Psoas muscle (tissue), 8 donors: ENCODE measurements at regions of chr2 and their contacts with region 1.

Region 1: GRCh38 chr2:86079981-86080911 is 25.4 kb downstream of the POLR1A start:
- DNase-seq: peak; percentile 81 to 91
- ATAC-seq: peak; percentile 82 to 91 (median 87)
- H3K4me3 ChIP-seq: no peak overlapping the region
- H3K27ac ChIP-seq: peak overlapping the region; percentile 58
- H3K4me1 ChIP-seq: peaks cover 16% of the 10 kb centered on the region
- H3K27me3 ChIP-seq: no peaks in the 10 kb centered on the region
- CTCF ChIP-seq: peak; percentile 76

Region 2: DNA sequence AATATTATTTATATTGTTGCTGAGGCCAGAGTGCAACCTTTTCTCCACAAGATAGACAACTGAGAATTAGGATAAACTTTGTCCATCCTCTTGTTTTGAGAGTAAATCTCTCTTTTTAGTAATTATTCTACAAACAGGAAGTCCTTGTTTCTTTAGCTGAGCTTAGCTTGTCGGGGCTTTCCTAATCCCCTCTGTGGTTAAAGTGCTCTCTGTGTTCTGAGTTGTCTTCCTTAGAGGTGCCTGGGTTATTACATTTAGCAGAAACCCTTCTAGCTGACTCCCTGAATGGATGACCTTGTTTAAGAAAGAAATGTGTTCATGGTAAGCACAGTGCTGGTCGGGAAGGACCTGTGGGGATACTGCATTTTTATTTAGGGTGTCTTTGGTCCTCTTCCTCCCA is 451.6 kb before region 1 on chr2:
- intact Hi-C with region 1: loop called in 1 of 2 experiments (anchors 10 kb)
- DNase-seq: no peak
- ATAC-seq: no peak
- H3K4me3 ChIP-seq: no peak overlapping the region
- H3K27ac ChIP-seq: no peak overlapping the region
- H3K4me1 ChIP-seq: no peaks in the 10 kb centered on the region
- H3K27me3 ChIP-seq: no peaks in the 10 kb centered on the region
- CTCF ChIP-seq: no peak

Region 3: DNA sequence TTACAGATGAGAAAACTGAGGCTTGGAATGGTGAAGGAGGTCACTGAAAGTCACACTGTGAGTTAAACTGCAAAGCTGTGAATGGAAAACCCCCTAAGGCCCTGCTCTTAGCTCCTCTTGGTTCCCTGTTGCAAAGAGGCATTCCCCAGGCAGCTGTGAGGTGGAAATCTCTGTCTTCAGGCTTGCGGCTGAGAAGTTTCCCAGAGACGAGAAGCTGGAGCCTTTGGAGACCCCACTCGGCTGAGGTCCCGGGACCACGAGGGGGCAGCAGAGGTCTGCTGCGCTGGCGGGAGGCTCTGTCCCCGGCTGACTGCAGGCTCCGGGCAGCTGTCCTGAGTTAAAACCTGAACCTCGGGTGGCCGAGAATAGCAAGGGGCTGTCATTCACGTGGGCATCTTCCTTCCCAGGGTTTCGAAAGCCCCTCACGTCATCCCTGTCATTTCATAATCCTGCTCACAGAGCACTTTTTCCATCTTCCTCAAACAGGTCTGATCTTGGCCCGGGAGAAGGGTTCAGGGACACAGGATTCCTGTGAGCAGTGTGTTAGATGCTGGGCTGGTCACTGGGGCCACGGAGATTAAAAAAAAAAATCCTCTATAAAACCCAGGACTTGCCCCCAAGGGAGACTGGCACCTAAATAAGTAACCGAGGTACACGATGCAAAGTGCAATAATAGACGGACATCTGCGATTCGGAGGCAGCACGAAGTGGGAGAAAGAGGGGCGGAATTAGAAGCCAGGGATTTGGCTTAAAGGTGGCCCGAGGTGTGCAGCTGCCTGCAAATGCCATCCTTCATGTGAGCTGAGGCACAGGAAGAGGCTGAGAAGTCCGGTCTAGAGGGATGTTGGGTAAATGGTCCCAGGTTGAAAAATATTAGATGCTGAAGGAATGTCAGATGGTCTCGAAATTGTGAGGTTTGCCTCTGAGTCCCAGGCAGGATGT is 351.1 kb before region 1 on chr2:
- intact Hi-C with region 1: loop called in 1 of 2 experiments (anchors 10 kb)
- DNase-seq: peak; percentile 94 to 97
- ATAC-seq: peak; percentile 79 to 81 (median 80)
- H3K4me3 ChIP-seq: no peak overlapping the region
- H3K27ac ChIP-seq: peak overlapping the region; percentile 98
- H3K4me1 ChIP-seq: peaks cover 48% of the 10 kb centered on the region
- H3K27me3 ChIP-seq: no peaks in the 10 kb centered on the region
- CTCF ChIP-seq: peak; percentile 97

Region 4: GRCh38 chr2:85741833-85742455 is 338.3 kb before region 1 on chr2:
- intact Hi-C with region 1: loop called in 1 of 2 experiments (anchors 10 kb)
- DNase-seq: peak; percentile 84 to 90
- ATAC-seq: peak; percentile 71 to 79 (median 72)
- H3K4me3 ChIP-seq: no peak overlapping the region
- H3K27ac ChIP-seq: peak overlapping the region; percentile 94
- H3K4me1 ChIP-seq: peaks cover 83% of the 10 kb centered on the region
- H3K27me3 ChIP-seq: no peaks in the 10 kb centered on the region
- CTCF ChIP-seq: no peak

Region 5: GRCh38 chr2:85826990-85827878 is 253.0 kb before region 1 on chr2:
- intact Hi-C with region 1: loop called (anchors 1 to 2 kb)
- DNase-seq: peak; percentile 79 to 88
- ATAC-seq: peak; percentile 92 to 98 (median 92)
- H3K4me3 ChIP-seq: peak overlapping the region; percentile 42
- H3K27ac ChIP-seq: no peak overlapping the region
- H3K4me1 ChIP-seq: peaks cover 3% of the 10 kb centered on the region
- H3K27me3 ChIP-seq: no peaks in the 10 kb centered on the region
- CTCF ChIP-seq: peak; percentile 96

Region 6: DNA sequence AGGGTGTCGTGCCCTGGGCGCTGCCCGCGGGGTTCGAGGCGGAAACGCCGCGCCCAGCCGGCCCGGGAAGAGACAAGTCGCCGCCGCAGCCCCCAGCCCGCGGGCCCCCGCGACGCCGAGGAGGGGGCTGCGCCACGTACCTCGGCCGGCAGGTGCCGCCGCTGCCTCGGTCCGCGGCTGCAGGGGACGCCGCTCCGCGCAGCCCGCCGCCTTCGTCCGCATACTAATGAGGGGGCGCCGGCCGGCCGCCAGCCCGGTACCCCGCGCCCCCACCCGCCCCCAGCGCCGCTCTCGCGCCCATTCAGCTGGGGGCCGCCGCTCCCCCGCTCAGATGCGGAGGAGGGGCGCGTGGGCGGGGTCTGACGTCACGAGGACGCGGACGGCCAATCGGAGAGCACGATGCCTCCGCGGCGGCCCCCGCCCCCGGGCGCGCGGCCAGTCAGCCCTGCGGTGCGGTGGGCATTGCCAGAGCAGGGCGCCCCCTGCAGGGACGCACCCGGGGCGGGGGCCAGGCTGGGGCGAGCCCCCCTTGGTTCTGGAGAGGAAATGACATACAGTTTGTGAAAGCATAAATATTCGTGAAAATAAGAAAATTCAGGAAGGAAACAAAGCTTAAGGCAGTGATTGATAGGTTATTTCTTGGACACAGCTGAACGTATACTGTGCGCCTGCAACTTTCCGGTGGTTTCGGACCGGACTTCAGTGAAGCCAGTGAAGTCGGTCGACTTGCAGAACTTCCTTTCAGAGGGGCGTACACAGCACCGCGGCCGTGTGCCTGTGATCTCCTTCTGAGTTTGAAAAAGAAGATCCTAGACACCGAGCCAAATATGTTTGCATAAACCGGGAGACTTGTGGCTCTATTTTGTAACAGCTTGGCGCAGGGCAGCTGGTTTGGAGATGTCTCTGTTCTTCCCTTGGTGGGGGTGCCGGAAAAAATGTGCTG is 191.3 kb before region 1 on chr2 and contains the start of gene ST3GAL5:
- intact Hi-C with region 1: loop called (anchors 2 kb)
- DNase-seq: peak; percentile 92 to 96
- ATAC-seq: peak; percentile 80 to 88 (median 86)
- H3K4me3 ChIP-seq: peak within 1 kb of the TSS; percentile 77
- H3K27ac ChIP-seq: peak within 1 kb of the TSS; percentile 96
- H3K4me1 ChIP-seq: peaks cover 32% of the 10 kb centered on the region
- H3K27me3 ChIP-seq: no peaks in the 10 kb centered on the region
- CTCF ChIP-seq: peak; percentile 61
- total RNA-seq, gene ST3GAL5: 7.9 to 19.5 (median 12.4) TPM

Region 7: DNA sequence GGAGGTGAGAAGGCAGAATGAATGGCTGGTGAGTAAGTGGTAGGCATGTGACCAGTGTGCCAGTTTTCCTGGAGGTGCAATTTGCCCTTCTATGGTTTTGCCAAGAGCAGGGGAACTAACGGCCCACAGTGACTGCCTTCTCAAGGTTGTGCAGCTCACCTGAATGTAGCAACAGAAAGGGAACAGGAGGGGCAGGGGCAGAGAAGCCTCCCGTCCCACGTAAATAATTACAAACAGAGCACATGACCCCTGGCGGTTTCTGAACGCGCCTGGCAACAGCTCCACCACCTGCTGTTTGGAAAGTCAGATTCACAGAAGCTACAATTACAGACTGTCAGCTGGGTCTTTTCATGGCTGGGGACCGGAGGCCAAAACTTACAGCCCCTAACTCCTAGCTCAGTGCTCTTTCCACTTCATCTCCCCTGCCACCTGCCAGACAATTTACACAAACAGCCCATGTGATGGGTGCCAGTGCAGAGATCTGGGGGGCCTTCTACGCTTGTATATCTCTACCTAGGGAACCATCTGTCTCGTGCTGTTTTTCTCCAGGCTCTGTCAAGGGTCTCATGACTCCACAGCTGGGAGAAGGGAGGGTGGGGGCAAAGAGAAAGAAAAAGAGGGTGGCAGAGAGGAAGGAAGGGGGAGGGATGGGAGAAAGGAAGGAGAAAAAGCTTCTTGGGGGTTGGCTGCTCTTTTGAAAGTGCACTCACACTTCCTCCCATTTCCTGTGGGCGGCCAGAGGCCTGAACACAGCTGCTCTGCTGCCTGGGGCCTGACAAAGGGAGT is 44.2 kb before region 1 on chr2:
- intact Hi-C with region 1: loop called in 1 of 2 experiments (anchors 5 kb)
- DNase-seq: peak; percentile 79 to 91
- ATAC-seq: peak; percentile 82 to 86 (median 84)
- H3K4me3 ChIP-seq: no peak overlapping the region
- H3K27ac ChIP-seq: peak overlapping the region; percentile 96
- H3K4me1 ChIP-seq: peaks cover 60% of the 10 kb centered on the region
- H3K27me3 ChIP-seq: no peaks in the 10 kb centered on the region
- CTCF ChIP-seq: peak; percentile 42